Activated naive CD4-positive, alpha-beta T cell treated with anti-CD3 and anti-CD28 coated beads for 36 hours (primary cell): ENCODE measurements at regions of chr7 and their contacts with region 1.

Region 1: DNA sequence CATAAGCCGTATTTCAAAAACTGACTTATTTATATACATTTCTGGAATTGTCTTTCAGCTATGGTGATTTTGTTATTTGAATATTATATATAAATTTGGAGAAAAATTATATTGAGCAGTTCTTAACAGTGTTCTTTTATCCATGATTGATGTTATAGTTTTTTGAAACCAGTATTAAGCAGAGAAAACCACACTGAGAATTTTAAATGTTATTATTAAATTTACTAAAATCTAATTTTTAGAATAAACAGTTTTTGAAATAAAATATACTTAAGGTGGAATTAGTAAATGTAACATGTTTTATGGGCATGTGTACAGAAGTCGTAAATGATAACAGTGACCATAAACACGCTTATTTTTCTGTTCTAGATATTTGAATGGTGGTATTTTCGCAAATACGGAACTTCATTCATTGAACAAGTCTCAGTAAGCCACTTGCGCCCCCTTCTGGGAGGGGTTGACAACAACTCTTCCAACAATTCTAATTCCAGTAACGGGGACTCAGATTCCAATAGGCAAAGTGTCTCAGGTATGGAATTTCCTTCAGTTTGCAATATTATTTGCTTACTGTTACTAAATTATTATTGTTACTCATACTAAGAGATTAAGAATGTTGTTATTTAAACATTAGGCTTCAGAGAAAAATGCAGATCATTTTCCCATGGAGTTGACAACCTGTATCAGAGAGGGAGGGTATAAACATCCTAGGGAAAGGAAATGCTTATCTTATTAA is 166.1 kb downstream of the ST7 start:
- DNase-seq: peak; percentile 88
- H3K4me3 Mint-ChIP-seq: no peak overlapping the region
- H3K27ac Mint-ChIP-seq: no peak overlapping the region
- H3K4me1 Mint-ChIP-seq: peaks cover 5% of the 10 kb centered on the region
- H3K27me3 Mint-ChIP-seq: peaks cover 1% of the 10 kb centered on the region

Region 2: DNA sequence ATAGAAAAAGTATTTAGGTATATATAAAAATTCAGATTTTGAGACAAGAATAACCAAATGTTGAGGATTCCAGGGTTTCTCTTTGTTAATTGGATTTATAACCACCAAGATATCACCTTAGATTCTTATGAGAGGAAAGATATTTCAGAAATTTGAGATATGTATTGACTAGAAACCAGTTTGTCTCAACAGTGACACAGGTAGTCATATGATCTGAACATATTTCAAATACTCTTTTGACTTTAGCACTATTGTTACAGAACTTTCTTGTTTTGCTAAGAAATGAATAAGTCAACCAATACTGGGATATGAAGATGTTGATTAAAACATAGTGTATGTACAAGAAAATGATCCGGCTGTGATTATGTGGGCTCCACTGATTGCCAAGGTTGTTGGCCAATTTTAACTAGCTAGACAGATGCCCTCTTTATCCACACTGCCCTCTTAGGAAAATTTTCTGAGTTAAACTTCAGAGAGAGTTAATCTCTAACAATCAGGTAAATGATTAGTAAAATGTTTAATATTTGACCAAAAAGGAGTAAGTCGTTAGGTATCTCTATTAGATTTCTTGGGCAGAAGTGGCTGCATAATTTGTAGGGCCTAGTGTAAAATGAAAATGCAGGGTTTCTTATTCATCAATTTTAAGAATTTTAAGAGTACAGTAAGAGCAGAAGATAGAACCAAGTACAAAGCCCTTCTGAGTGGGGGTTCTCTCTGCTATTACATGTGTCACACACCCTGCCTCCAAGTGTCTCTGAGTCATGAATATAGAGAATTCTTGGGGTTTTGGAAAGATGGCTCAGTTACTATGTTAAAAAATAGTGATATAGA is 1464.8 kb before region 1 on chr7:
- CTCF ChIA-PET with region 1: no interaction called
- intact Hi-C with region 1: no loop called
- DNase-seq: no peak
- H3K4me3 Mint-ChIP-seq: no peak overlapping the region
- H3K27ac Mint-ChIP-seq: no peak overlapping the region
- H3K4me1 Mint-ChIP-seq: no peaks in the 10 kb centered on the region
- H3K27me3 Mint-ChIP-seq: no peaks in the 10 kb centered on the region

Region 3: GRCh38 chr7:116342125-116342524 is 777.2 kb before region 1 on chr7:
- CTCF ChIA-PET with region 1: no interaction called
- intact Hi-C with region 1: no loop called
- DNase-seq: no peak
- H3K4me3 Mint-ChIP-seq: no peak overlapping the region
- H3K27ac Mint-ChIP-seq: no peak overlapping the region
- H3K4me1 Mint-ChIP-seq: no peaks in the 10 kb centered on the region
- H3K27me3 Mint-ChIP-seq: peaks cover 4% of the 10 kb centered on the region

Region 4: GRCh38 chr7:116929914-116930913 is 189.1 kb before region 1 on chr7:
- CTCF ChIA-PET with region 1: interaction called, 45 read pairs
- intact Hi-C with region 1: loop called (anchors 1 kb)
- DNase-seq: peak; percentile 85
- H3K4me3 Mint-ChIP-seq: no peak overlapping the region
- H3K27ac Mint-ChIP-seq: no peak overlapping the region
- H3K4me1 Mint-ChIP-seq: peaks cover 3% of the 10 kb centered on the region
- H3K27me3 Mint-ChIP-seq: no peaks in the 10 kb centered on the region